AG04449 (cell line): ENCODE measurements at regions of chr2 and their contacts with region 1.

Region 1: DNA sequence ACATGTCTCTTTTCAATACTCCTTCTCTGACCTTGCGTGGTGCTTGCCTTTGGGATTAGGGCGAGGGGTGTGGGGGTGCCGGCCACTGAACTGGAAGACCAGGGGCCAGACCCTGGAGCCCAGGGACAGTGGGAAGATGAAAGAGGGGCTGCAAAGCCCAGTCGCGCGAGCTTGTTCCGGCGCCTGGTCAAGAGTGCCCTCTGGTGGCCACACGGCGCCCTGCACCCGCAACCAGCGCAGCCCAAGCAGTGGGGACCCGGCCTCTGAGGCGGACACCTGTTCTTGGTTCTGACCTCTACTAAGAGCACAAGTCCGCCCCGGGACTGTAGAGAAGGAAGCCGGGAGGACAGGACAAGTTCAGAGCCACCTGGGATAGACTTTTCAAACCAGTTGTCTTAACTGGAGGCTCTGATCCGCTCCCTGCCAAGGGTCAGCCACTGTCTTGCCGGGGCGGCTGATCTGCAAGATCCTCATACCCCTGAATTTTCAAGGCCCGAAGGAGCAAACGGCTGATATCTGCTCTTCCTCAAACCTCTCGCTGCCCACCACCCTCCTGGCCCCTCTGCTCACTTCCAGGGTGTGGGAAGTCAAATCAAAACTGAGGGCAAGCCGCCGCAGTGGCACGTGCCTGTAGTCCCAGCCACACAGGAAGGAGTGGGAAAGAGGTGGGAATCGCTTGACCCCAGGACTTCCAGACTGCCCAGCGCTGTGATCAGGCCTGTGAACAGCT is 14.9 kb upstream of the MSH6 start:
- DNase-seq: no peak
- H3K4me3 ChIP-seq: no peak overlapping the region; the same call in 1 of the 2 replicates
- CTCF ChIP-seq: peak; percentile 99

Region 2: DNA sequence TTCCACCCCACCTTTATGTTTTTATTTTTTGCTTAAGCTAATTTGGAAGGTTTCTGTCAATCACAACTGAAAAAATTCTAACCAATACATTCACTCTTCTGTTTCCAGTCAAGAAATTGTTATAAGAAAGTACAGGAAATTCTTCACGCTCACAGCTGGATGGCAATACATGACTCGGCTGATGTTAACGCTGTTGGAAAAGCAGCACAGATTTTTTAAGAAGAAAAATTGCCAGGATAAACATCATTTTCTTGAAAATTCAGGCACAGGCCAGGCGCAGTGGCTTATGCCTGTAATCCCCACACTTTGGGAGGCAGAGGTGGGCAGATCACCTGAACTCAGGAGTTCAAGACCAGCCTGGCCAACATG is 659.1 kb before region 1 on chr2:
- CTCF ChIA-PET with region 1: no interaction called
- POLR2A ChIA-PET with region 1: no interaction called
- DNase-seq: no peak
- H3K4me3 ChIP-seq: no peak overlapping the region
- CTCF ChIP-seq: no peak

Region 3: GRCh38 chr2:47344890-47345589 is 423.0 kb before region 1 on chr2:
- CTCF ChIA-PET with region 1: interaction called, 11 read pairs
- POLR2A ChIA-PET with region 1: no interaction called
- DNase-seq: no peak
- H3K4me3 ChIP-seq: peak overlapping the region; percentile 6; the same call in 1 of the 2 replicates
- CTCF ChIP-seq: no peak

Region 4: GRCh38 chr2:47422560-47422959 is 345.5 kb before region 1 on chr2:
- CTCF ChIA-PET with region 1: interaction called, 13 read pairs
- POLR2A ChIA-PET with region 1: no interaction called
- DNase-seq: no peak
- H3K4me3 ChIP-seq: no peak overlapping the region
- CTCF ChIP-seq: no peak

Region 5: DNA sequence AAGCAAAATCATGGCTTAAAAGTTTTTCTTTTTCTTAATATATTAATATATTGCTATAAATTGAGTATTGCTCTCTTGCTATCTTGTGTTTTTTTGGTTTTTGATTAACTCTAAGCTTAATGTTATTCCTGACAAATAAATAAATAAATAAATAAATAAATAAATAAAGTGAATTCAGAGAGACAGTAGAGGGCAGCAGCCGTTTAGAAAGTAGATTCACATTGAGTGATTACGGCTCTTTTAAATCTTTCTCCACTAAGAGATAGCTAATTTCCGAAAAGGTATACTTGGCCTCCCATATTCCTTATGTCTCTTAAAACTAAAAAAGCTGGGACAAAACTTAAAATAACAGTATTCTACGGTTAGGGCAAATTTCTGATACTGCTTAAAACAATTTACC is 330.8 kb before region 1 on chr2:
- CTCF ChIA-PET with region 1: interaction called, 276 read pairs
- POLR2A ChIA-PET with region 1: no interaction called
- DNase-seq: no peak
- H3K4me3 ChIP-seq: no peak overlapping the region
- CTCF ChIP-seq: peak; percentile 11

Region 6: GRCh38 chr2:47580855-47581600 is 187.0 kb before region 1 on chr2:
- CTCF ChIA-PET with region 1: no interaction called
- POLR2A ChIA-PET with region 1: no interaction called
- DNase-seq: no peak
- H3K4me3 ChIP-seq: no peak overlapping the region
- CTCF ChIP-seq: no peak